MCF 10A (cell line): ENCODE measurements at regions of chr5 and their contacts with region 1.

Region 1: GRCh38 chr5:87113861-87114260 is 153.8 kb upstream of the RASA1 start:
- DNase-seq: peak; percentile 42
- H3K4me3 Mint-ChIP-seq: no peak overlapping the region
- H3K27ac Mint-ChIP-seq: peak overlapping the region; percentile 64
- H3K4me1 Mint-ChIP-seq: peaks cover 13% of the 10 kb centered on the region
- H3K27me3 Mint-ChIP-seq: no peaks in the 10 kb centered on the region
- CTCF ChIP-seq: no peak

Region 2: DNA sequence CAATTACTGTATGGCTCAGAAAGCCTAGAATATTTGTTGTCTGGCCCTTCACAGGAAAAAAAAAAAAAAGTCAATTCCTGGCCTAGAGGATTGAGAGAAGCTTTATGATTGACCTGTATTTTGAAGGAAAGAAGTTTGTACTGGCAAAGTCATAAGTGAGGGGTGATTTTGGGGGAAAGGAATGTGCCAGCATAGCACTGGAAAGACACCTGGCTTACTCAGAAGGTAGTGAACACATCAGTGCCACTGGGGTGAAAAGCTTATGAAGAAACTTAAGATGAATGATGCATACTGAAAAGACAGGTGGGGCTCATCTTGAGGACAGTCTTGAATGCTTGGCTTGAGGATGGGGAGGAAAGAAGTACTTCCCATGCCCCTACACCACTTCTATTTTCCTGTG is 25.9 kb after region 1 on chr5:
- CTCF ChIA-PET with region 1: no interaction called
- POLR2A ChIA-PET with region 1: interaction called, 5 read pairs
- intact Hi-C with region 1: loop called (anchors 1 kb)
- DNase-seq: no peak
- H3K4me3 Mint-ChIP-seq: no peak overlapping the region
- H3K27ac Mint-ChIP-seq: no peak overlapping the region
- H3K4me1 Mint-ChIP-seq: peaks cover 5% of the 10 kb centered on the region
- H3K27me3 Mint-ChIP-seq: no peaks in the 10 kb centered on the region
- CTCF ChIP-seq: no peak